Right ventricle myocardium inferior (tissue), 1 donor: ENCODE measurements at regions of chr3 and their contacts with region 1.

Region 1: DNA sequence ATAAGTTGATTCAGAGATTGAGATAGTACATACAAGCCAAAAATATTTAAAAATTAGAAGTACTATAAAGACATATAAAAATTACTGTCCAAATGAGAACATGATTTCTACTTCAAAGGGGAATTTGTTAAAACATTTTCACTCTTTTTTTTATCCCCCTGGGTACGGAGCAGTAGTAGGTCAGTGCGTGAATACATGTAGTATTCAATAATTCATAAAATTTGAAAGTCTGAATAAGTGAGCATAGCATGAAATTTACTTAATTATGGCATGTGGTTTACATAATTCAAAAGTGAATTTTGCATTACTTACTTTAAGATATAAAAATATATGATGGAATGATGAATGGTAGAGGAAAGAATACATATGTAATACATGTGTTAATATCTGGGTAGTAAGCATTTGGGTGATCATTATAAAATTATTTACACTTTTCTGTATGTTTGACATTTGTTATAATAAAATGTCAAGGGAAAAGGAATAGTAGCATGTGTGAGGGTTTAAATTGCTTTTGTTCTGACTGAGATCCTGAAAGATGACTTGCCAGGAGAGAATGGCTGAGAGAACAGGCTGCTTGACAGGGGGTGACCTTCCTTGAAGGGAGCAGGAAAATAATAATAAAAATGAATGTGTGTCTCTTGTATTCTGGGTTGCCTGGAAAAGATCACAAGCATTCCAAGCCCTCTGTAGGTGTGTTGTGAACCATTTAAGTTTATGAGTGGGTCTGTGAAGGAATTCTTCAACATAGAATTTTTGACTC is 1178.8 kb downstream of the ZPLD1 start:
- DNase-seq: no peak
- ATAC-seq: no peak

Region 2: DNA sequence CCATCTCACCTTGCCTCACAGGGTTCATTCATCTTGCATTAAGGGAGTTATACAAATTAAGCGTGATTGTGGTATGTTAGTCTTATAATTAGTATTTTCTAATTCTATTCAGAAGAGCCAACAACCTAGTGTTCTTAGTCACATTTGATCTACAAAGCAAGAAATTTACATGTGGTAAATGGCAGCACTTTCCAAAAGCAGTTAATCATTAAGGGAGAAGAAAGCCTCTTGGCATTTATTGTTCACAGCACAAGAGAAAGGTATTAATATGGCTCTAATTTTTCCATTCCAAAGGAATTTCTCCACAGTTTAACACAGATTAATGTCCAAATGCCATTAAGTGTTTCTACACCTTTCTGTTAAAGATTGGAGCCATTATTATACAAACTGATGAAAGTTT is 101.7 kb before region 1 on chr3:
- intact Hi-C with region 1: no loop called
- DNase-seq: no peak
- ATAC-seq: no peak

Region 3: GRCh38 chr3:103644450-103644849 is 30.9 kb after region 1 on chr3:
- intact Hi-C with region 1: loop called (anchors 2 kb)
- DNase-seq: no peak
- ATAC-seq: no peak